Prostate gland (tissue), 2 donors: ENCODE measurements at regions of chr20 and their contacts with region 1.

Region 1: GRCh38 chr20:62668441-62669027 is 26.2 kb downstream of the SLCO4A1 start:
- DNase-seq: peak; percentile 55
- H3K4me3 ChIP-seq: no peak overlapping the region
- H3K27ac ChIP-seq: peak overlapping the region in 1 of 2 donors; percentile 41
- H3K4me1 ChIP-seq: no peaks in the 10 kb centered on the region
- H3K27me3 ChIP-seq: peaks cover 7% of the 10 kb centered on the region
- CTCF ChIP-seq: peak; percentile 58 to 94 (median 80)
- POLR2A ChIP-seq: no peak

Region 2: GRCh38 chr20:62550087-62550632 is 118.4 kb before region 1 on chr20:
- intact Hi-C with region 1: no loop called
- DNase-seq: no peak
- H3K4me3 ChIP-seq: peak overlapping the region; percentile 26 to 27
- H3K27ac ChIP-seq: peak overlapping the region; percentile 24 to 55
- H3K4me1 ChIP-seq: peaks cover 3% of the 10 kb centered on the region
- H3K27me3 ChIP-seq: peaks cover 12% of the 10 kb centered on the region
- CTCF ChIP-seq: no peak
- POLR2A ChIP-seq: no peak

Region 3: GRCh38 chr20:62642040-62642665 is 26.4 kb before region 1 on chr20 and contains the start of gene SLCO4A1:
- intact Hi-C with region 1: no loop called
- DNase-seq: peak; percentile 46
- H3K4me3 ChIP-seq: peak within 1 kb of the TSS; percentile 32 to 40
- H3K27ac ChIP-seq: peak within 1 kb of the TSS in 1 of 2 donors; percentile 38
- H3K4me1 ChIP-seq: peaks cover 16% of the 10 kb centered on the region
- H3K27me3 ChIP-seq: no peaks in the 10 kb centered on the region
- CTCF ChIP-seq: peak in 2 of 4 experiments; percentile 5 to 17
- POLR2A ChIP-seq: peak; percentile 82
- total RNA-seq, gene SLCO4A1: 4.5 to 12.3 TPM

Region 4: DNA sequence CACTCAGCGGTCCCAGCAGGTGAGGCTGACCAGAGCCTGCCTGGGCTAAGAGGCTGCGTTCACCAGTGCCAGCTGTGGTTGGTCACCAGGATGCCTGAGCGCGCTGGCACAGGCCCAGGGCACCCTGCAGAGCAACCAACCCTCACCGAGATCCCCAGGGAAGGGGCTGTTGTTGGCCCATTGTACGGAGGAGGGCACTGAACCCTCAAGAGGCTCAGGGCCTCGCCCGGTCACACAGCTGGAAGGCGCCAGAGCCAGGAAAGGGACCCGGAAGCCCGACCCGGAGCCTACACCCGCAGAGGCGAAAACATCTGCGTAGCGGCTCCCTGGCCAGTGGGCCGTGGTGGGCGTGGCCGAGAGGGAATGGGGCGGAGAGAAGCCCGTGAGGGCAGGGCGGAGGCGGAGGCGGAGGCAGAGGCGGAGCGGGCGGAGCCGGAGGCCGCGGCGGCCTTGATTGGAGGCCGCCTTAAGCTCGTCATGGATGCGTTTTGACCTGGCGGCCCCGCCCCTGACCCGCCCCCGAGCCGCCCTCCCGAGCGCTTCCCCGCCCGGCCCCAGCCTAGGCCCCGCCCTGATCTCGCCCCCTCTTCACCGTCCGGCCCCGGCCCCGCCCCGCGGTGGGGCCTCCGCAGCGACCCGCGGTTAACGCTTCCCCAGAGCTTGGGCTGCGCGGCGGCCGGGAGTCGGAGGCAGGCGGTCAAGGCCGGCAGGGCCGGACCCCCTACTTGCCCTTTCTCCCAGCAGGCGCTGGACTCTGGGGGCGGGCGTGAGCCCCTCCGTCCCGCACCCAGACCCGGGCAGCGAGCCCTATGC is 125.6 kb after region 1 on chr20:
- intact Hi-C with region 1: loop called (anchors 2 kb)
- DNase-seq: peak; percentile 93
- H3K4me3 ChIP-seq: peak overlapping the region; percentile 63 to 77
- H3K27ac ChIP-seq: peak overlapping the region; percentile 89 to 91
- H3K4me1 ChIP-seq: peaks cover 9% of the 10 kb centered on the region
- H3K27me3 ChIP-seq: no peaks in the 10 kb centered on the region
- CTCF ChIP-seq: peak in 1 of 4 experiments; percentile 3
- POLR2A ChIP-seq: peak; percentile 90

Region 5: GRCh38 chr20:62808211-62808865 is 139.8 kb after region 1 on chr20:
- intact Hi-C with region 1: loop called (anchors 5 kb)
- DNase-seq: no peak
- H3K4me3 ChIP-seq: no peak overlapping the region
- H3K27ac ChIP-seq: no peak overlapping the region
- H3K4me1 ChIP-seq: no peaks in the 10 kb centered on the region
- H3K27me3 ChIP-seq: no peaks in the 10 kb centered on the region
- CTCF ChIP-seq: peak; percentile 67 to 81 (median 78)
- POLR2A ChIP-seq: no peak